ENCODE measurements at regions of chr3 and their contacts with region 1.

Region 1: DNA sequence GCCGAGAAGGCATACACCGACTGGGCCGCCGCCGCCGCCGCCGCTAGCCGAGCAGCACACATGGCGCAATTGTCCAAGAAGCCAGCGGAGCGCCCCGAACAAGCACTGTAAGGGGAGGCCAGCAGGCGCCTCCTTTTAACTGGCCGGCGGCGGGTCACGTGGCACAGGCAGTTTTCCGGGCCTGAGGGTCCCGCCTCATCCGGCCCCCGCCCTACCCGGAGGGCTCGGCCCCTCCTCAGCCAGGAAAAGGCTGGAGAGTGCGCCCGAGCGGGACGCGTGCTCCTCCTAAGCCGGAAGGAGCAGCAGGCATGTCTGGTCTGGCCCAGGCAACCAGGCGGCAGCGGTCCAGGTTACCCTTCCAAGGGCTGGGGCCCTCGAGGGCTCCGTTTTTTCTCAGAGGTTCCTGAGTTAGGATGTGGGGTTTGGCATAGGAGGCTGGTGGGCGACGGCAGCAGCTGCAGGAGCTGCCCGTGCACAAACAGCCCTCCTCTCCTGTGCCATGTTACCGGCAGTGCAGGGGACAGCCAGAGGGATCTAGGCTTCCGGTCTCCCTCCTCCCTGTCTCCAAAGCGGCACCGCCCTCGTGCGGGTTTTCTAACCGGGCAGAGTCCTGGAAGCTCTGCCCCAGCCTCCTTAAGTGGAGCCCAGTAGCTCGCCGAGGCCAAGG is at the start of gene GPX1:
- DNase-seq: peak; percentile 96
- ATAC-seq: peak; percentile 95 to 97 (median 97)
- H3K4me3 ChIP-seq: peak within 1 kb of the TSS; percentile 60 to 92 (median 81)
- H3K27ac ChIP-seq: peak within 1 kb of the TSS; percentile 74 to 96 (median 92)
- H3K4me1 ChIP-seq: peaks cover 6 to 53% (median 40%) of the 10 kb centered on the region in 9 donors
- H3K27me3 ChIP-seq: no peaks in the 10 kb centered on the region
- CTCF ChIP-seq: no peak
- total RNA-seq, gene GPX1: 85.2 to 223 (median 102) TPM

Region 2: DNA sequence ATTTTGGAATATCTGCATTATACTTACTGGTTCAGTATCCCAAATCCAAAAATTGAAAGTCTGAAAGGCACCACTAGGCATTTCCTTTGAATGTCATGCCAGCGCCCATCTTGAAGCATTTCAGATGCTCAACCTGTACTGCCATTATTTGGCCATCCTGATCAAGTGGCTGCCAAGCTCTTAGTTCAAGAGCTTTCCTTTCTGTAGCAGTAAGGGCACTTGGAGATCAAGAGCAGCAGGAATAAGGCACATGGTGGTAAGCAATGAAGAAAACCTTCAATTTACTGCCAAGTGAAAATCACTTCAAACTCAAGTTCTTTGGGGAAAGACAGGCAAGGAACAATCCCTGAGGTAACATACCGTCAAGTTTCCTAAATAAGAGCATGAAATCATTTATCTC is 43.4 kb after region 1 on chr3:
- intact Hi-C with region 1: loop called in 2 of 10 experiments (anchors 5 kb)
- DNase-seq: no peak
- ATAC-seq: no peak
- H3K4me3 ChIP-seq: no peak overlapping the region
- H3K27ac ChIP-seq: peak overlapping the region in 1 of 10 donors; percentile 18
- H3K4me1 ChIP-seq: peaks cover 12 to 91% (median 72%) of the 10 kb centered on the region in 9 donors
- H3K27me3 ChIP-seq: no peaks in the 10 kb centered on the region
- CTCF ChIP-seq: no peak

Region 3: DNA sequence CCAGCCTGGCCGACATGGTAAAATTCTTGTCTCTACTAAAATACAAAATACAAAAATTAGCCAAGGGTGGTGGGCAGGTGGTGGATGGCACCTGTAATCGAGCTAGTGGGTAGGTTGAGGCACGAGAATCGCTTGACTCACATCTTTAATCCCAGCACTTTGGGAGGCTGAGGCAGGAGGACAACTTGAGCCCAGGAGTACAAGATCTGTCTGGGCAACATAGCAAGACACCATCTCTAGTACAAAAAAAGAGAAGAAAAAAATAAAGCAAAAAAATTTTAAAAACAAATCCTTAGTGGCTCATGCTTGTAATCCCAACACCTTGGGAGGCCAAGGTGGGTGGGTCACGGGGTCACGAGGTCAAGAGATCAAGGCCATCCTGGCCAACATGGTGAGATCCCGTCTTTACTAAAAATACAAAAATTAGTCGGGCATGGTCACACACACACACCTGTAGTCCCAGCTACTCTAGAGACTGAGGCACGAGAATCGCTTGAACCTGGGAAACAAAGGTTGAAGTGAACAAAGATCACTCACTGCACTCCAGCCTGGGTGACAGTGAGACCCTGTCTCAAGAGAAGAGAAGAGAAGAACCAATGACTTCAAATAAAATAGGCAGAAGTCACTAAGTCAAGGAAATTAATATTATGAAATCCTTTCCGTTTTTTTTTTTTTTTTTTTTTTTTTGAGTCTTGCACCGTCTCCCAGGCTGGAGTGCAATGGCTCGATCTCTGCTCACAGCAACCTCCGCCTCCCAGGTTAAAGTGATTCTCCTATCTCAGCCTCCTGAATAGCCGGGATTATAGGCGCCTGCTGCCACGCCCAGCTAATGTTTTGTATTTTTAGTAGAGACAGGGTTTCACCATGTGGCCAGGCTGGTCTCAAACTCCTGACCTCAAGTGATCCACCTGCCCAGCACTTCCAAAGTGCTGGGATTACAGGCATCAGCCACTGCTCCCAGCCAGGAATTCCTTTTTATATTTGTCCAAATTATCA is 48.5 kb after region 1 on chr3:
- intact Hi-C with region 1: loop called in 6 of 10 experiments (anchors 2 to 5 kb)
- DNase-seq: no peak
- ATAC-seq: no peak
- H3K4me3 ChIP-seq: no peak overlapping the region
- H3K27ac ChIP-seq: peak overlapping the region in 8 of 10 donors; percentile 1 to 48 (median 32)
- H3K4me1 ChIP-seq: peaks cover 4 to 82% (median 60%) of the 10 kb centered on the region in 9 donors
- H3K27me3 ChIP-seq: no peaks in the 10 kb centered on the region
- CTCF ChIP-seq: no peak

Region 4: DNA sequence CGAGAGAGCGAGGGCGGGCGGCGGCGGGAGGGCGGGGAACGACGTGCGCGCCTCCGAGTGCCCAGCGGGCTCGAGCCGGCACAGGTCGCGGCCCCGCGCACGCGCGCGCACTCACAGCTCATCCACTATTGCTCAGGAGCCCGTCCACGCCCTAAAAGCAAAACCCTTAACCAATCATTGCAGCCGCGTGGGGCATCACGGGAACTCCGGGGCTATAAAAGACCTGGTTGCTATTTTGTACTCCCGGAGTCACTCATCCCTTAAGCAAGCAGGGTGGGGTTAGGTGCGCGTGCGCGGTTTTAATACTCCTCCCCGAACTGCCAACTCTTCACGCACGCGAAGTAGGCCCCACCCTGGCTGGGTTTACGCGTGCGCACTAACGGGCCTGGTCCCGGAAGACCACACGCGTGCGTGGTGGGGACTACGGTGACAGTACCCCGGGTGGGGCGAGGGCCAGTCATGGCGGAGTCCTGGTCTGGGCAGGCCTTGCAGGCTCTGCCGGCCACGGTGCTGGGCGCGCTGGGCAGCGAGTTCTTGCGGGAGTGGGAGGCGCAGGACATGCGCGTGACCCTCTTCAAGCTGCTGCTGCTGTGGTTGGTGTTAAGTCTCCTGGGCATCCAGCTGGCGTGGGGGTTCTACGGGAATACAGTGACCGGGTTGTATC is 53.8 kb after region 1 on chr3 and contains the starts of genes RHOA and TCTA:
- intact Hi-C with region 1: loop called in 6 of 10 experiments (anchors 2 to 5 kb)
- DNase-seq: peak; percentile 99 to 100
- ATAC-seq: peak; percentile 94 to 97 (median 96)
- H3K4me3 ChIP-seq: peak within 1 kb of the TSS; percentile 73 to 99 (median 91)
- H3K27ac ChIP-seq: peak within 1 kb of the TSS; percentile 95 to 99 (median 98)
- H3K4me1 ChIP-seq: peaks cover 11 to 78% (median 68%) of the 10 kb centered on the region in 9 donors
- H3K27me3 ChIP-seq: no peaks in the 10 kb centered on the region
- CTCF ChIP-seq: no peak
- total RNA-seq, gene RHOA: 226 to 335 (median 250) TPM
- total RNA-seq, gene TCTA: 13.9 to 22.6 (median 17.6) TPM

Measured in heart right ventricle (tissue), 16 donors.